ENCODE measurements at regions of chr10 and their contacts with region 1.

Region 1: GRCh38 chr10:13787015-13787421 is 200.3 kb downstream of the PRPF18 start:
- DNase-seq: no peak
- ATAC-seq: peak in 1 of 4 donors; percentile 30
- H3K4me3 ChIP-seq: no peak overlapping the region
- H3K27ac ChIP-seq: no peak overlapping the region
- H3K4me1 ChIP-seq: peaks cover 5% of the 10 kb centered on the region
- H3K27me3 ChIP-seq: peaks cover 0 to 4% (median 0%) of the 10 kb centered on the region in 3 donors
- CTCF ChIP-seq: no peak

Region 2: GRCh38 chr10:13891128-13892000 is 104.3 kb after region 1 on chr10:
- intact Hi-C with region 1: loop called in 1 of 2 experiments (anchors 5 kb)
- DNase-seq: peak in 1 of 2 donors; percentile 58
- ATAC-seq: peak in 2 of 4 donors; percentile 44 to 65
- H3K4me3 ChIP-seq: peak overlapping the region; percentile 66
- H3K27ac ChIP-seq: peak overlapping the region; percentile 60
- H3K4me1 ChIP-seq: no peaks in the 10 kb centered on the region
- H3K27me3 ChIP-seq: peaks cover 0 to 33% (median 8%) of the 10 kb centered on the region in 3 donors
- CTCF ChIP-seq: no peak

Region 3: GRCh38 chr10:13945390-13946208 is 158.6 kb after region 1 on chr10:
- intact Hi-C with region 1: no loop called
- DNase-seq: no peak
- ATAC-seq: no peak
- H3K4me3 ChIP-seq: no peak overlapping the region
- H3K27ac ChIP-seq: no peak overlapping the region
- H3K4me1 ChIP-seq: no peaks in the 10 kb centered on the region
- H3K27me3 ChIP-seq: no peaks in the 10 kb centered on the region
- CTCF ChIP-seq: no peak

Region 4: GRCh38 chr10:13961097-13961496 is 174.1 kb after region 1 on chr10:
- intact Hi-C with region 1: loop called in 1 of 2 experiments (anchors 10 kb)
- DNase-seq: no peak
- ATAC-seq: peak in 3 of 4 donors; percentile 41 to 68 (median 61)
- H3K4me3 ChIP-seq: no peak overlapping the region
- H3K27ac ChIP-seq: no peak overlapping the region
- H3K4me1 ChIP-seq: no peaks in the 10 kb centered on the region
- H3K27me3 ChIP-seq: no peaks in the 10 kb centered on the region
- CTCF ChIP-seq: no peak

Region 5: GRCh38 chr10:14093730-14094484 is 306.9 kb after region 1 on chr10:
- intact Hi-C with region 1: loop called in 1 of 2 experiments (anchors 2 kb)
- DNase-seq: no peak
- ATAC-seq: no peak
- H3K4me3 ChIP-seq: no peak overlapping the region
- H3K27ac ChIP-seq: no peak overlapping the region
- H3K4me1 ChIP-seq: no peaks in the 10 kb centered on the region
- H3K27me3 ChIP-seq: no peaks in the 10 kb centered on the region
- CTCF ChIP-seq: peak; percentile 30

Region 6: GRCh38 chr10:14478604-14479003 is 691.6 kb after region 1 on chr10:
- intact Hi-C with region 1: loop called in 1 of 2 experiments (anchors 10 kb)
- DNase-seq: peak; percentile 67 to 76
- ATAC-seq: peak in 2 of 4 donors; percentile 45 to 65
- H3K4me3 ChIP-seq: no peak overlapping the region
- H3K27ac ChIP-seq: no peak overlapping the region
- H3K4me1 ChIP-seq: no peaks in the 10 kb centered on the region
- H3K27me3 ChIP-seq: no peaks in the 10 kb centered on the region
- CTCF ChIP-seq: peak; percentile 40